ENCODE measurements at regions of chr2 and their contacts with region 1.

Region 1: GRCh38 chr2:58046585-58047372 is at the start of gene VRK2:
- DNase-seq: peak; percentile 90
- H3K4me3 Mint-ChIP-seq: peak within 1 kb of the TSS; percentile 87
- H3K27ac Mint-ChIP-seq: peak within 1 kb of the TSS; percentile 95
- H3K4me1 Mint-ChIP-seq: peaks cover 44% of the 10 kb centered on the region
- H3K27me3 Mint-ChIP-seq: no peaks in the 10 kb centered on the region
- total RNA-seq, gene VRK2: 23.3 to 26.3 TPM

Region 2: GRCh38 chr2:58019209-58019608 is 27.6 kb before region 1 on chr2:
- CTCF ChIA-PET with region 1: no interaction called
- POLR2A ChIA-PET with region 1: no interaction called
- intact Hi-C with region 1: loop called (anchors 1 kb)
- DNase-seq: no peak
- H3K4me3 Mint-ChIP-seq: no peak overlapping the region
- H3K27ac Mint-ChIP-seq: no peak overlapping the region
- H3K4me1 Mint-ChIP-seq: peaks cover 11% of the 10 kb centered on the region
- H3K27me3 Mint-ChIP-seq: no peaks in the 10 kb centered on the region

Region 3: GRCh38 chr2:58081000-58081399 is 34.2 kb after region 1 on chr2:
- CTCF ChIA-PET with region 1: no interaction called
- POLR2A ChIA-PET with region 1: no interaction called
- intact Hi-C with region 1: no loop called
- DNase-seq: no peak
- H3K4me3 Mint-ChIP-seq: no peak overlapping the region
- H3K27ac Mint-ChIP-seq: no peak overlapping the region
- H3K4me1 Mint-ChIP-seq: peaks cover 2% of the 10 kb centered on the region
- H3K27me3 Mint-ChIP-seq: no peaks in the 10 kb centered on the region

Region 4: DNA sequence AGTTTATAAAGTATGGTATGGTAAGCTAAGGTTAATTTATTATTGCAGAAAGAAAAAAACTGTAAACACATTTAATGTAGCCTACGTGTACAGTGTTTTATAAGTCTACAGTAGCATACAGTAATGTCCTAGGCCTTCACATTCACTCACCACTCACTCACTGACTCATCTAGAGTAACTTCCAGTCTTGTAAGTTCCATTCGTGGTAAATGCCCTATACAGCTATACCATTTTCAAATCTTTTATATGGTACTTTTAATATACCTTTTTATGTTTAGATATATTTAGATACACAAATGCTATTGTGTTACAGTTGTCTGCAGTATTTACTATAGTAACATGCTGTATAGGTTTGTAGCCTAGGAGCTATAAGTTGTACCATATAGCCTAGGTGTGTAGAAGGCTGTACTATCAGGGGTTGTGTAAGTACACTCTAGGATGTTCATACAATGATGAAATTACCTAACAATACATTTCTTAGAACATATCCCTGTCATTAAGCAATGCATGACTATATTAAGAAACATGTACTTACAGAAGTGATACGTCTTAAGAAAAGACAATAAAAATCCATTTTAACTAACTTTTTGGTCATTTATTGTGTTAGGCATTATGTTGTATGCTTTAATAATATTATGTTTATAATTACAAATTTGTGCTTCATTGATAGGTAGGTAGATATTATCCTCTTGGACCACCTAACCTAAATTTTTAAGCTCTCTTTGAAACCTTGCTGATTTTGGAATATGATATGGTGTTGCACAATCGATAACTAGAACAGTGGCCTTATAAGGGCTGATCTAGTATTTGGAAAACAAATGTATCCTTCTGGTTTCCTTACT is 51.7 kb after region 1 on chr2:
- CTCF ChIA-PET with region 1: no interaction called
- POLR2A ChIA-PET with region 1: no interaction called
- intact Hi-C with region 1: no loop called
- DNase-seq: no peak
- H3K4me3 Mint-ChIP-seq: no peak overlapping the region
- H3K27ac Mint-ChIP-seq: no peak overlapping the region
- H3K4me1 Mint-ChIP-seq: peaks cover 3% of the 10 kb centered on the region
- H3K27me3 Mint-ChIP-seq: no peaks in the 10 kb centered on the region

Region 5: DNA sequence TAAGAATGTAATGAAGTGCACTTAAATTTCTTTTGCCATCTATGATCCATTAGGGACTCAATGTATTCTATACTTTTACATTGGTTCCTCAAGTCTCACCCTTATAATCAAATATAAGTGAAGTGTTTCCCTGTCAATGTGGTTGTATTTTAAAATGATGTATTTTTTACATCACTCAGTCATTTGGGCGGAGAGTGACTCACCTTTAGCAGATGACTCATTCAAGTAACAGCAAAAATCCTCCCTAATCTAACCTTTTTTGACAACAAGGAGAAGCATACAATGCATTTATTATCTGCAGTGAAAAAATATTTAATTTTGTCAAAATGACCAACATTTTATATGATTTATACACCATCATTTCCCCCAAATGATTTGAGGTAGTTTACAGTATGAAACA is 99.9 kb after region 1 on chr2:
- CTCF ChIA-PET with region 1: no interaction called
- POLR2A ChIA-PET with region 1: no interaction called
- intact Hi-C with region 1: loop called (anchors 5 kb)
- DNase-seq: peak; percentile 12
- H3K4me3 Mint-ChIP-seq: no peak overlapping the region
- H3K27ac Mint-ChIP-seq: no peak overlapping the region
- H3K4me1 Mint-ChIP-seq: peaks cover 8% of the 10 kb centered on the region
- H3K27me3 Mint-ChIP-seq: no peaks in the 10 kb centered on the region

Region 6: DNA sequence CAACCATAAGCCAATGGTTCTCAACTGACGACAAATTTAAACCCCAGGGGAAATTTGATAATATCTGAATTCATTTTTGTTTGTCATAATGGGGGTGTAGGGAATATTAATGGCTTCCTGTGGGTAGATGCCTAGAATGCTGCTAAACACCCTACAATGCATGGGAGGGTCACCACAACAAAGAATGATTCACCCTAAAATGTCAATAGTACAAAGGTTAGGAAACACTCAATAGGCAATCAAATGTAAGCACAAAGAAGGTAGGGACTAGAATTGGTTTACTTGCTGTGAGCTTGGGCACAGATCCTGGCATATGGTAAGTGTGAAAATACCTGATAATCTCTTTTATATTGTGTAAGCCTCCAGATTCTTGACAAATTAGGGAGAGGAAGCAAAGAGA is 214.4 kb after region 1 on chr2:
- CTCF ChIA-PET with region 1: no interaction called
- POLR2A ChIA-PET with region 1: no interaction called
- intact Hi-C with region 1: loop called (anchors 5 kb)
- DNase-seq: no peak
- H3K4me3 Mint-ChIP-seq: no peak overlapping the region
- H3K27ac Mint-ChIP-seq: no peak overlapping the region
- H3K4me1 Mint-ChIP-seq: peaks cover 3% of the 10 kb centered on the region
- H3K27me3 Mint-ChIP-seq: peaks cover 14% of the 10 kb centered on the region

Measured in activated CD4-positive, alpha-beta memory T cell treated with anti-CD3 and anti-CD28 coated beads for 36 hours (primary cell).